BJ (cell line): ENCODE measurements at regions of chr2 and their contacts with region 1.

Region 1: DNA sequence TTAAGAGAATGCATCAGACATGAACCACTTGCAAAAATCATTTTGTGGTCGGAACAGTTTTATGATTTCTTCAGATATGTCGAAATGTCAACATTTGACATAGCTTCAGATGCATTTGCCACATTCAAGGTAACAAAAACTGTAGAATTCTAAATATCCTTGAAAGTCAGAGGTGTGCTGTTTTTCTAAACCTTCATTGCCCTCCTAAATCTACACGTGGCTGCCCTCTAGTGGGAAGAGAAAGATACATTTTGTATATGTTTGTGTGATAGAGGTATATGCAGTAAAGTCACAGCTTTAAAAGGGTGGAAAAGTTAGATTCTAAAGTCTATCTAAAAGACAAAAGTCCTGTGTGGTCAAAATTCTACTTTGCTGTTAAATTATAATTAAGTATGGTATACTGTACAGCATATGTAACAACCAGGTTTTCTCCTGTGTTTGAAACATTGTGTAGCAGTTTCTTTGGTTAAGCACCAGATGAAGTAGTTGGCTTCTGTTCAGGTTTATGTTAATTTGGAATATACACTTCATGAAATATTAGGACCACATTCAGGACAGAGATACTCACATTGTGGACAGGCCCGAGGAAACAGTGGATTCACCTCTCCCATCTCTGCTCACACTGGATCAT is 65.9 kb upstream of the ITM2C start:
- DNase-seq: no peak
- H3K4me3 ChIP-seq: no peak overlapping the region
- H3K27me3 ChIP-seq: no peaks in the 10 kb centered on the region
- CTCF ChIP-seq: peak; percentile 62

Region 2: DNA sequence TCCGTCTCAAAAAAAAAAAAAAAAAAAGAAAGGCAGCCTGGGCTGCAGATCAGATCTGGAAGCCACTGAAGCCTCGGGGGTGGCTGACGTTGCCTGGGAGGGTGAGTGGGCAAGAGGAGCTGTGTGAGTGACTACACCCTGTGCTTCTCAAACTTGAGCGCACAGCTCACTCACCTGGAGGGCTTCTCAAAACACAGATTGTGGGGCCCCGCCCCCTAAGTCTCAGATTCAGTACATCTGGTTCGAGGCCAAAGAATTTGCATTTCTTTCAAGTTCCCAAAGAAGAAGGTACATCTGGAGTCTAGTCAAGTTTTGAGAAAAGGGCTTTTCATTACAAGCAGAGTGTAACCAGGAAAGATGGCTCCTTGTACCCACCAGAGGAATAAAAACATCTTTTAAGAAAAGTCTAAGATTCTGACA is 184.0 kb before region 1 on chr2:
- CTCF ChIA-PET with region 1: interaction called, 11 read pairs
- POLR2A ChIA-PET with region 1: no interaction called
- DNase-seq: no peak
- H3K4me3 ChIP-seq: no peak overlapping the region
- H3K27me3 ChIP-seq: no peaks in the 10 kb centered on the region
- CTCF ChIP-seq: no peak

Region 3: DNA sequence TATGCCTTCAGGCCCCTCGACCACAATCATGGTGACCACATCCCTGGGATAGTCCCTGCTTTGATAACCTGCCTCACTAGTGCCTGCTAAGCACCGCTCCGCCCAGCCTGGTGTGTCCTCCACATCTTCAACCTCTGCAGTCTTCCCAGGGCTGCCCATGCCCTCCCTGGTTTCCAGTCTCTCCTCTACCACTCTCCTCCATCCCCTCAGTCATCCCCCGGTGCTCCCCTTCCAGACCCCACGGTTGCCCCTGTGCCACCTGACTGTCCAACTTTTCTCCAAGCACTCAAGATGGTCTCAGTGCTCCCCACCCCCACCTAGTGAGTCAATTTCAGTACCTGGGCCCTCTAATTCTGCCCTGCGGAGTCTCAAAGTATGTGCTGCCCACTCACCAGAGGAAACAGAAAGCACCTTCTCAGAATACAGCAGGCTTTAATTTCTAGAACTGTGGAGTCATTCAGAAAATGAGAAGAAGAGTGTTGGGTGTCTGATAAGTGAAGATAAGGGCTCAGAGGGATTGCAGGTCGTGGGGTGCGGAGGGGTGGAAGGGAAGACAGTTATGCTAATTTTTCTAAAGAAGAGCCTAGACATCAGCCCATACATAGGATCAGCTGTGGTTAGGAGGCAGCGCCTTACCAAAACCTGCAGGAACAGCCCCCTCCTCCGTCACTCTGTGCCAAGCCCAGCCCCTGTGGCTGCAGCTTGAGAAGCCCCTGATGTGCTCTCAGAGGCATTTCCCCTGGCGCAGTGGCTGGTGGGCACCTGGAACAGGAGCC is 139.8 kb before region 1 on chr2:
- CTCF ChIA-PET with region 1: no interaction called
- POLR2A ChIA-PET with region 1: no interaction called
- DNase-seq: no peak
- H3K4me3 ChIP-seq: no peak overlapping the region
- H3K27me3 ChIP-seq: no peaks in the 10 kb centered on the region
- CTCF ChIP-seq: no peak

Region 4: DNA sequence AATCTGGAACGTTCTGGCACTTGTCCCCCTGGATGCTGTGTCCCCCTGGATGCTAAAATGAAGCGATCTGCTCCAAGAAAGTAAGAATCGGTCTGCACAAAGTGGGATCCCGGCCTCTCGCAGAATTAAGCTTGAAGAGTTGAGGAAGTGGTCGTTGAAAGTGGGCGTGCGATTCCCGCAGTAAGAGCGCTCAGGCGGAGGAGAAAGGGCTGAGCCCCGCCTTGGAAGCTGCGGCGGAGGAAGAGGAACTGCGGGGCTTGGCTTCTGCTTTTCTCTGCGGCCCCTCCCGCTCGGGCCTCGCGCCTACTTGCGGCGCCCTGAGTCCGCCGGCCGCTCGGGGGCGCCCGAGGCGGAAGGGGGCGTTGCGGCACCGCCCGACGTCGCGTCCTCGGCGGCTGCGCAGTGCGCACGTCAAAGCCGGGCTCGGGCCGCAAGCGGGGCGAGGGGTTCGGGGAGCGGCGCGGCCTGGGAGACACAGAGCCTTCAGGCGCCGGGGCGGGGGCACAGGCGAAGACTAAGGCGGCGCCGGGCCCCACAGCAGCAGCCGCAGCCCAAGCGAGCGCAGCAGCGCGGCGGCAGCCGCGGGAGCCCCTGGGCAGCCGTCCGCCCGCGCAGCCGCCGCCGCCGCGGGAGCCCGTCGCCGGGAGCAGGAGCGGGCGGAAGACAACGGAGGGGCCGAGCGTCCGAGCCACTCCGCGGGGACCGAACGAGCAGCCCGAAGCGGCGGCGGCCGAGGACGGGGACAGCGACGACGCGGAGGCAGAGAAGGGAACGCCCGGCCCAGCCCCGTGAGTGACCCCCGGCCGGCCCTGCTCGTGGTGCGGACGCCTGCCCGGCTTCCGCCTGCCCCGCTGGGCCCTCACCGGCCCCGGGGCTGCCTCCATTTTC is 86.2 kb before region 1 on chr2 and contains the start of gene CAB39:
- CTCF ChIA-PET with region 1: interaction called, 26 read pairs
- POLR2A ChIA-PET with region 1: no interaction called
- DNase-seq: peak; percentile 33
- H3K4me3 ChIP-seq: peak within 1 kb of the TSS; percentile 80
- H3K27me3 ChIP-seq: no peaks in the 10 kb centered on the region
- CTCF ChIP-seq: peak; percentile 58
- polyA plus RNA-seq, gene CAB39: 23.6 and 44.3 TPM in 2 replicates

Region 5: DNA sequence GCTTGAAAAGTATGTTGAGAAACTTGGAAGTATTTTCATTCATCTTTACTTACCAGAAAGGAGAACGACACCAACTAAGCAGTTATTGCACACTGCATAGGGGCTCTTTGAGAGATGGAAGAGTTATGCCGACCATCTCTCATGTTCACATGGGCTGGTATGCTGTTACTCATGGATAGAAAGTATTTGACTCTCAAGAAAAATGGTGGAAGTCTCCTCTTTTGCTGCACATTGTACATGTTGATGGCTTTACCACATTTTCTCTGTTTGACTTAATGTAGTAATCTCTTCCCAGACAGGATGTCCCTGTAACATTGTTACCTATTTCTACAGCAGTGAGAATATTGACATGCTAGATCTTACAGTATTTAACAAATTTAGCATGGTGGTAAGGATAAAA is 63.0 kb before region 1 on chr2:
- CTCF ChIA-PET with region 1: interaction called, 11 read pairs
- POLR2A ChIA-PET with region 1: no interaction called
- DNase-seq: no peak
- H3K4me3 ChIP-seq: no peak overlapping the region
- H3K27me3 ChIP-seq: no peaks in the 10 kb centered on the region
- CTCF ChIP-seq: no peak

Region 6: GRCh38 chr2:230814616-230815015 is 15.7 kb after region 1 on chr2:
- CTCF ChIA-PET with region 1: interaction called, 12 read pairs
- POLR2A ChIA-PET with region 1: no interaction called
- DNase-seq: no peak
- H3K4me3 ChIP-seq: no peak overlapping the region
- H3K27me3 ChIP-seq: no peaks in the 10 kb centered on the region
- CTCF ChIP-seq: peak; percentile 60